Activated CD4-positive, alpha-beta T cell treated with anti-CD3 and anti-CD28 coated beads, Interleukin-2, amount 10 ng/mL, durations not matched to agents 24 days and 14 days (primary cell): ENCODE measurements at regions of chr6 and their contacts with region 1.

Region 1: GRCh38 chr6:36912586-36912985 is 26.8 kb downstream of the C6orf89 start:
- DNase-seq: peak; percentile 93
- H3K4me3 Mint-ChIP-seq: peak overlapping the region; percentile 82
- H3K27ac Mint-ChIP-seq: peak overlapping the region; percentile 89
- H3K4me1 Mint-ChIP-seq: peaks cover 57% of the 10 kb centered on the region
- H3K27me3 Mint-ChIP-seq: no peaks in the 10 kb centered on the region

Region 2: DNA sequence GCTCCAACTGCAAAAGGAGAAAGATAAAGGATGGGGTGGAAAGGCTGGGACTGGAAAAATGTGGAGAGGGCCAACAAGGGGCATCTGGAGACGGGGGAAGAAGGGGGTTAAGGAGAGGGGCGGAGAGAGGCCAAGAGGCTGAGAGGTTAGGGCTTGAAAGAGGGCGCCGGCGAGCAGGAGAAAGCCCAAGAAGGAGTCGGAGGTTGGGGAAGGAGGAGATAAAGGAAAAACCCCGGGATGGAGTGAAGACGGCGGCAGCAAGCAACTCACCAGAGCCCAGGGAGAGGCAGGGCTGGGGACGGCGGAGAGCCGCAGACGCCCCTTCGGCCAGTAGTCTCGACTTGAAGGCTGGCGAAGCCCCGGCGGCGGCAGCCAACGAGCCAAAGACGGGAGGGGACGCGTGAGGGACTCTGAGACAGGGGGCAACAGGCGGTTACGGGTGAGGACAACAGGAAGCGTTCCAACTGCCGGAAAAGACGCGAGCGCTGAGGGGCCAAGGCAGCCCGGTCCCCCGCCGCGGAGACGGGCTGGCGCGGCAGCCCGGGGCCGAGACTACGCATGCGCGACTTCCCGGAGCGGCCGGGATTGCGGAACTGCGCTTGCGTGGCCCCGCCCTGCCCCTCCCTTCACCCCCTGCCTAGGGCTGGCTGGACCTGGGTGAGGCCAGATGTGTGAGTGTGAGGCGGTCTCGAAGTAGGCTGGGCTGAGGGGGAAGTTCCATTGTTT is 365.5 kb before region 1 on chr6 and contains the start of gene STK38:
- intact Hi-C with region 1: loop called (anchors 2 kb)
- DNase-seq: peak; percentile 96
- H3K4me3 Mint-ChIP-seq: peak within 1 kb of the TSS; percentile 94
- H3K27ac Mint-ChIP-seq: peak within 1 kb of the TSS; percentile 92
- H3K4me1 Mint-ChIP-seq: peaks cover 37% of the 10 kb centered on the region
- H3K27me3 Mint-ChIP-seq: no peaks in the 10 kb centered on the region
- total RNA-seq, gene STK38: 20.7 and 21.5 TPM in 2 replicates

Region 3: GRCh38 chr6:36885461-36886401 is 26.9 kb before region 1 on chr6 and contains the start of gene C6orf89:
- intact Hi-C with region 1: loop called (anchors 1 kb)
- DNase-seq: peak; percentile 99
- H3K4me3 Mint-ChIP-seq: peak within 1 kb of the TSS; percentile 89
- H3K27ac Mint-ChIP-seq: peak within 1 kb of the TSS; percentile 89
- H3K4me1 Mint-ChIP-seq: peaks cover 28% of the 10 kb centered on the region
- H3K27me3 Mint-ChIP-seq: no peaks in the 10 kb centered on the region
- total RNA-seq, gene C6orf89: 25.9 and 27.4 TPM in 2 replicates

Region 4: DNA sequence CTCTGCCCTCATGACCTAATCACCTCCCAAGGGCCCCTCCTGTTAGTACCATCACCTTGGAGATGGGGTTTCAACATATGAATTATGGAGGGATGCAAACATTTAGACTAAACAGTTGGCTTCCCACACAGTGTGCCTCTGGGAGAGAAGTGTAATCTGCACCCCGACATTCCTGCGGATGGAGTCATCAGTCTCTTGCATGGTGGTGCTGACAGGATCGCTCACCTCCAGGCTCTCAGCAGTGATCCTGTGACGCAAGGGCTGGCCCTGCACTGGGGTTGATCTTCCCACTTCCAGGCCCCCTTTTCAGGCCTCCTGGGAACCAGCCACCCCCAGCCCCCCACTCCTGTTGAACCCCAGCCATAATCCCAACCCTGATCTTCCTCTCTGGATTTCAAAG is 25.9 kb after region 1 on chr6:
- intact Hi-C with region 1: no loop called
- DNase-seq: no peak
- H3K4me3 Mint-ChIP-seq: no peak overlapping the region
- H3K27ac Mint-ChIP-seq: no peak overlapping the region
- H3K4me1 Mint-ChIP-seq: peaks cover 8% of the 10 kb centered on the region
- H3K27me3 Mint-ChIP-seq: peaks cover 26% of the 10 kb centered on the region

Region 5: DNA sequence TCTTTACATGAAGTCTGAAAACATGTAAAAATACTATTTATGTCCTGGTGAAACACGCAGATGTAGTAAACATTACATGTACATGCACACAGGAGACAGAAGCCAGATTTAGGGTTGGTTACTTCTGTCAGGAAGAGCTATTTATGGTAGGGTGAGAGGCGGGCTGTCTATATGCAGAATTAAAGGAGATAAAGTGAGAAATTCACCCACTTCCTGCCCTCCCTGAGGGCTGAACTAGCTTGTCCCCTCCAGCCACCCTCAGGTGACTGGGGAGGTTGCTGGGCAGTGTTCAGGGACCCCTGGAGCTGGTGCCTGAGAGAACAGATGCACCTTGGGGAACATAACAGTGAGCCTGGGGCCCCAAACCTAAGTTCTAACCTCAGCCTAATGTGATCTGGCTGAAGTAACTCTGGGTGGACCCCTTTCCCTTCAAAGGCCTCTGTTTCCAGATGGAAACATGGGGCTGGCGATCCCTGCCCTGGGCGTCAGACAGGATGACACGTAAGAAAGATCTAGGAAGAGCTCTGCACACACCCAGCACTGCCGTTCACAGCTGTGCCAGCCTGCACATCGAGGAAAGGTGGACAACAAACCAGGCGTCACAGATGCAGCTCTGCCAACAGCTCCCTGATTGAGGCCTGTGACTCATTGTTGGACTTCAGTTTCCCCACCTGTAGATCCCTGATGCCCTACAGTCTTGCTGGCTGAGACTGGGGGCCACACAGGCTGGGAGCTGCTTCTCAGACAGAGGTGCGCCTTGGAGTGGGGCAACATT is 43.3 kb after region 1 on chr6:
- intact Hi-C with region 1: loop called (anchors 2 kb)
- DNase-seq: peak; percentile 66
- H3K4me3 Mint-ChIP-seq: no peak overlapping the region
- H3K27ac Mint-ChIP-seq: no peak overlapping the region
- H3K4me1 Mint-ChIP-seq: peaks cover 34% of the 10 kb centered on the region
- H3K27me3 Mint-ChIP-seq: peaks cover 6% of the 10 kb centered on the region

Region 6: GRCh38 chr6:37018198-37019064 is 105.8 kb after region 1 on chr6:
- intact Hi-C with region 1: loop called (anchors 1 kb)
- DNase-seq: peak; percentile 97
- H3K4me3 Mint-ChIP-seq: peak overlapping the region; percentile 16
- H3K27ac Mint-ChIP-seq: peak overlapping the region; percentile 85
- H3K4me1 Mint-ChIP-seq: peaks cover 44% of the 10 kb centered on the region
- H3K27me3 Mint-ChIP-seq: no peaks in the 10 kb centered on the region

Region 7: DNA sequence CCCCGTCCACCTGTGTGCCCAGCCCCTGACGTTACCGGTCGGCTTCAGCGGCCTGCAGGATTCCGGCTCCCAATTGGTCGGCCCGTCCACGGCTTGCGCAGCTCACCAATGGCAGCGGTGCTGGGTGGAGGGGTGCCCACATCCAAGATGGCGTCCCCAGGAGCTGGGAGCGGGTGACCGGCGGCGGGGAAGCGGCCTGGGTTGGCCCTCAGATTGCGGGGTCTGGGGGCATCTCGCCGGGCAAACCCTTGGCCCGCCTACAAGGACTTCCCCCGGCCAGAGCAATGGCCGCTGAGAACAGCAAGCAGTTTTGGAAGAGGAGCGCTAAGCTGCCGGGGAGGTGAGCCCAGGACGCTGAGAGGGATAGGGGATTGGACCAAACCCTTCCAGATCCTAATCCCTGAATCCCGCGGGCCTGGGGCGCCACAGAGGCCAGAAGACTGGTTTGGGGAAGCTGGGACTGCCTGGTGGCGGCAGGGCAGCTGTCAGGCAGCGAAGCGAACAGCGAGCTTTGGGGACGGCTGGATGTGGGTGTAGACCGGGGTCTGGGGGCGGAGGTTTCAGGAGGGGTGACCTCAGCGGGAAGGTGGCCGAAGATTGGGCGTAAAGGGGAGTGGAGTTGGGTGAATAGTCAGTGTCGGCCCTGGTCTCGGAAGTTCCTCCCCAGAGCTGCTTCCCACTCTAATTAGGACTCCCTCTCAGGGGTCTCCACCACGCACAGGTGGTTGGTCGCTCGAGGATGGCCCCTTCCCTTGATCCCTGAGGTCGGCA is 345.2 kb after region 1 on chr6 and contains the starts of genes TBC1D22B and TMEM217:
- intact Hi-C with region 1: loop called (anchors 5 kb)
- DNase-seq: peak; percentile 99
- H3K4me3 Mint-ChIP-seq: peak within 1 kb of the TSS; percentile 88
- H3K27ac Mint-ChIP-seq: peak within 1 kb of the TSS; percentile 95
- H3K4me1 Mint-ChIP-seq: peaks cover 42% of the 10 kb centered on the region
- H3K27me3 Mint-ChIP-seq: no peaks in the 10 kb centered on the region
- total RNA-seq, gene TBC1D22B: 17.2 and 18.7 TPM in 2 replicates
- total RNA-seq, gene TMEM217: 4.1 and 6.1 TPM in 2 replicates